ENCODE measurements at regions of chr10 and their contacts with region 1.

Region 1: DNA sequence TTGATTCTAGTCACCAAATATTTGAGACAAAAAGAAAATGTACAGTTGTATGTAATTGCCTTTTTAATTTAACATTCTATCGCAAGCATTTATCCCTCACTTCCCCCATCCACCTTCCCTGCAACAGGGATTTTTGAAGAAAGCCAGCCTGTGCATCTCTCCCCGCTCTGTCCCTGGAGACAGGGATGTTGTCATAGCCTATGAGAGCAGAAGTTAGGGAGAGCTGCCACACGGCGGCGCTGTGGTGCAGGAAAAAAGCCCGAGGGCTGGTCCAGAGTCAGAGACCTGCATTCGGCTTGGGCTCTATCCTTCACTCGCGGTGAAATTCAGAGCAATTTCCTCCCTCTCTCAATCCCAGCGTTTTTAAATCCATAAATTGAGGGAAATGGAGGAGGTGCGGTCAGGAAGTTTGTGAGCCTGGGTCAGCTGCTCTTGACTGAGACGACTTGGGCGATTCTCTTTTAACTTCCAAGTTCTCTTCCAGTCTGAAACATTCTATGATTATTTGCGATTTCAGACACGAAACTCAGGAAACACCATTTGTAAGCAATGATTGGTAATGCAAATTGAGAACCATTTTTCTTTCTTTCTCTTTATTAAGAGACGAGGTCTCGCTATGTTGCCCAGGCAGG is 17.5 kb downstream of the HKDC1 start:
- DNase-seq: peak; percentile 78 to 82 (median 79)
- H3K4me3 ChIP-seq: no peak overlapping the region
- H3K4me3 Mint-ChIP-seq: peak overlapping the region in 2 of 8 donors; percentile 7 to 48
- H3K27ac ChIP-seq: no peak overlapping the region
- H3K27ac Mint-ChIP-seq: peak overlapping the region in 3 of 7 donors; percentile 11 to 63 (median 17)
- H3K4me1 ChIP-seq: peaks cover 17% of the 10 kb centered on the region
- H3K4me1 Mint-ChIP-seq: peaks cover 14 to 27% (median 17%) of the 10 kb centered on the region in 4 donors
- H3K27me3 ChIP-seq: no peaks in the 10 kb centered on the region
- H3K27me3 Mint-ChIP-seq: no peaks in the 10 kb centered on the region

Region 2: GRCh38 chr10:69269761-69270160 is 32.1 kb after region 1 on chr10:
- CTCF ChIA-PET with region 1: no interaction called
- POLR2A ChIA-PET with region 1: no interaction called
- intact Hi-C with region 1: no loop called
- DNase-seq: no peak
- H3K4me3 ChIP-seq: no peak overlapping the region
- H3K4me3 Mint-ChIP-seq: no peak overlapping the region
- H3K27ac ChIP-seq: no peak overlapping the region
- H3K27ac Mint-ChIP-seq: no peak overlapping the region
- H3K4me1 ChIP-seq: no peaks in the 10 kb centered on the region
- H3K4me1 Mint-ChIP-seq: peaks cover 3 to 7% (median 5%) of the 10 kb centered on the region in 4 donors
- H3K27me3 ChIP-seq: no peaks in the 10 kb centered on the region
- H3K27me3 Mint-ChIP-seq: no peaks in the 10 kb centered on the region

Region 3: GRCh38 chr10:69392481-69393000 is 154.9 kb after region 1 on chr10:
- CTCF ChIA-PET with region 1: interaction called, 148 read pairs
- POLR2A ChIA-PET with region 1: interaction called, 11 read pairs
- intact Hi-C with region 1: loop called (anchors 1 kb)
- DNase-seq: peak; percentile 79 to 81 (median 80)
- H3K4me3 ChIP-seq: no peak overlapping the region
- H3K4me3 Mint-ChIP-seq: no peak overlapping the region
- H3K27ac ChIP-seq: peak overlapping the region; percentile 22
- H3K27ac Mint-ChIP-seq: peak overlapping the region; percentile 41 to 91 (median 79)
- H3K4me1 ChIP-seq: peaks cover 15% of the 10 kb centered on the region
- H3K4me1 Mint-ChIP-seq: peaks cover 7 to 17% (median 11%) of the 10 kb centered on the region in 4 donors
- H3K27me3 ChIP-seq: no peaks in the 10 kb centered on the region
- H3K27me3 Mint-ChIP-seq: no peaks in the 10 kb centered on the region

Region 4: GRCh38 chr10:69397972-69398371 is 160.3 kb after region 1 on chr10:
- CTCF ChIA-PET with region 1: interaction called, 148 read pairs
- POLR2A ChIA-PET with region 1: interaction called, 11 read pairs
- intact Hi-C with region 1: no loop called
- DNase-seq: no peak
- H3K4me3 ChIP-seq: no peak overlapping the region
- H3K4me3 Mint-ChIP-seq: no peak overlapping the region
- H3K27ac ChIP-seq: no peak overlapping the region
- H3K27ac Mint-ChIP-seq: no peak overlapping the region
- H3K4me1 ChIP-seq: no peaks in the 10 kb centered on the region
- H3K4me1 Mint-ChIP-seq: peaks cover 0 to 2% (median 0%) of the 10 kb centered on the region in 4 donors
- H3K27me3 ChIP-seq: no peaks in the 10 kb centered on the region
- H3K27me3 Mint-ChIP-seq: no peaks in the 10 kb centered on the region

Measured in CD4-positive, alpha-beta memory T cell (primary cell).